ENCODE measurements at regions of chr6 and their contacts with region 1.

Region 1: DNA sequence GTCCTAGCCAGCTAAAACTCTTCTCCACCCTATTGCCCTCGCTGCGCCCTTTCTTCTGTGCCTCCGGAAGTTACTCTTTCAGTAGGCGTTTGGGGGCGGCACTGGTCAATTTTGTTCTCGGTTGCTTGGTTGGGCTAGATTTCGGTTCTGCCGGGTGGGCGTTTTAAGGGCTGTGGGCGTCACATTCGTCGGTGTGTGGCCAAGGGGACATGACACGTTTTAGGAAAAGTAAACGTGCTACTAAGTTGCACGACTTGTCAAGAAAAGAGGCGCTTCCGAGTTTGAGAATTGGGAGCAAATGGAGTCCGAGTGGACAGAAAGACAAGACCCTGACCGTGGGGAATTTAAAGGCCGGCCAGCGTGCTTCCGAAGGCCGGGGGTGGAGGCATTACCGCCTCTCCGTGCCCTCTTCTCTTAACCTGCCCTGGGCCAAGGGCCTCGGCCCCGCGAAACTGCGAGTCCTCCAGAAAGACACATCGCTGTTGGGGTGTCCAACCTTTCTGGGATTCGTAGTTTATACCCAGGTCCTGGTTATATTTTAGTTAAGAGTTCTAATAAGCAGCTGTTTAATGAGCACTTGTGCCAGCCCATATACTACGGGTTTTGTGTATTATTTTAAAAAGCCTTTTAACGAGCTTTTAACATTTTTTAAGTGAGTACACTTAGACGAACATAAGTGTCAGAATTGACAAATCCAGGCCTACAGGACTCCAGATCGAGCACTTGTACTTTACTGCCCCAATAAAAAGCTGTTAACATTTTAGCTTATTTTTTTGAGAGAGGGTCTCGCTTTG is 661 bp upstream of the BAG6 start:
- DNase-seq: peak in 22 of 35 experiments; percentile 2 to 89 (median 83)
- ATAC-seq: peak; percentile 73 to 74 (median 73)
- H3K4me3 ChIP-seq: peak overlapping the region; percentile 75 to 90
- H3K4me3 Mint-ChIP-seq: peak overlapping the region; percentile 82 to 95 (median 90)
- H3K27ac ChIP-seq: peak overlapping the region; percentile 98
- H3K27ac Mint-ChIP-seq: peak overlapping the region; percentile 98 to 100
- H3K4me1 ChIP-seq: peaks cover 15 to 37% of the 10 kb centered on the region in 2 experiments
- H3K4me1 Mint-ChIP-seq: peaks cover 50 to 63% (median 60%) of the 10 kb centered on the region in 3 donors
- H3K27me3 ChIP-seq: no peaks in the 10 kb centered on the region
- H3K27me3 Mint-ChIP-seq: no peaks in the 10 kb centered on the region

Region 2: GRCh38 chr6:31665501-31666336 is 12.6 kb after region 1 on chr6 and contains the start of gene CSNK2B:
- CTCF ChIA-PET with region 1: interaction called, 3 to 10 read pairs
- POLR2A ChIA-PET with region 1: interaction called, 6 to 11 read pairs
- DNase-seq: peak; percentile 94 to 99 (median 98)
- ATAC-seq: peak; percentile 87 to 93 (median 88)
- H3K4me3 ChIP-seq: peak within 1 kb of the TSS; percentile 86 to 90
- H3K4me3 Mint-ChIP-seq: peak within 1 kb of the TSS; percentile 94 to 97 (median 95)
- H3K27ac ChIP-seq: peak within 1 kb of the TSS; percentile 97
- H3K27ac Mint-ChIP-seq: peak within 1 kb of the TSS; percentile 98 to 99
- H3K4me1 ChIP-seq: peaks cover 19 to 63% of the 10 kb centered on the region in 2 experiments
- H3K4me1 Mint-ChIP-seq: peaks cover 57 to 69% (median 64%) of the 10 kb centered on the region in 3 donors
- H3K27me3 ChIP-seq: no peaks in the 10 kb centered on the region
- H3K27me3 Mint-ChIP-seq: no peaks in the 10 kb centered on the region
- total RNA-seq, gene CSNK2B: 98.4 to 129 (median 126) TPM

Region 3: GRCh38 chr6:31702819-31703522 is 49.8 kb after region 1 on chr6 and contains the start of gene ABHD16A:
- CTCF ChIA-PET with region 1: no interaction called
- POLR2A ChIA-PET with region 1: interaction called in 1 of 2 experiments, 10 read pairs
- DNase-seq: peak; percentile 95 to 100 (median 98)
- ATAC-seq: peak; percentile 94 to 95 (median 95)
- H3K4me3 ChIP-seq: peak within 1 kb of the TSS; percentile 82 to 99
- H3K4me3 Mint-ChIP-seq: peak within 1 kb of the TSS; percentile 98 to 99 (median 98)
- H3K27ac ChIP-seq: peak within 1 kb of the TSS; percentile 96
- H3K27ac Mint-ChIP-seq: peak within 1 kb of the TSS; percentile 94 to 98
- H3K4me1 ChIP-seq: peaks cover 13 to 32% of the 10 kb centered on the region in 2 experiments
- H3K4me1 Mint-ChIP-seq: peaks cover 33 to 38% (median 36%) of the 10 kb centered on the region in 3 donors
- H3K27me3 ChIP-seq: peaks cover 0 to 4% of the 10 kb centered on the region in 2 experiments
- H3K27me3 Mint-ChIP-seq: no peaks in the 10 kb centered on the region
- total RNA-seq, gene ABHD16A: 58.2 to 74.4 (median 61.2) TPM